CD8-positive, alpha-beta T cell (primary cell): ENCODE measurements at regions of chr7 and their contacts with region 1.

Region 1: DNA sequence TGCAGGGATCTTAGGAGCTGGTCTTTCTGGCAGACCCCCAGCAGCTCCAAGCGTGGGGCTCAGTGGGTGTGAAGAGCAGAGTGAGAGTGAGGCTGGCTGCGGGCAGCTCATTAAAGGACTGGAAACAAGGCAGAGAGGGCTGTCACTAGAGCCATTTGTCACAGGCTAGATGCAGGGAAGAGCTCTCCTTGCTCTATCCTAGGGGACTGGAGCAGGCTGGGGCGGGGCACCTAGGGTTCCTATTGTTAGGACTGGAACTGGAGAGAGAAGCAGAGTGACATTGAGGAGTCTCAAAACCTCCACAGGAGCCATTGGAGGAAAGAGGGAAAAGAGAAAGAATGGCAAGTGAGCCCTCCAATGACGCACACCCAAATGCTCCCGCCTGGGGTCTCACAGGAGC is 772 bp upstream of the DDC start:
- DNase-seq: no peak
- ATAC-seq: no peak
- H3K4me3 ChIP-seq: no peak overlapping the region
- H3K4me3 Mint-ChIP-seq: no peak overlapping the region
- H3K27ac ChIP-seq: no peak overlapping the region
- H3K27ac Mint-ChIP-seq: no peak overlapping the region
- H3K4me1 ChIP-seq: no peaks in the 10 kb centered on the region
- H3K4me1 Mint-ChIP-seq: no peaks in the 10 kb centered on the region
- H3K27me3 ChIP-seq: no peaks in the 10 kb centered on the region
- H3K27me3 Mint-ChIP-seq: no peaks in the 10 kb centered on the region
- CTCF ChIP-seq: no peak

Region 2: GRCh38 chr7:50528266-50529092 is 37.5 kb before region 1 on chr7:
- CTCF ChIA-PET with region 1: no interaction called
- POLR2A ChIA-PET with region 1: no interaction called
- intact Hi-C with region 1: loop called in 1 of 2 experiments (anchors 2 kb)
- DNase-seq: no peak
- ATAC-seq: no peak
- H3K4me3 ChIP-seq: no peak overlapping the region
- H3K4me3 Mint-ChIP-seq: no peak overlapping the region
- H3K27ac ChIP-seq: no peak overlapping the region
- H3K27ac Mint-ChIP-seq: no peak overlapping the region
- H3K4me1 ChIP-seq: no peaks in the 10 kb centered on the region
- H3K4me1 Mint-ChIP-seq: no peaks in the 10 kb centered on the region
- H3K27me3 ChIP-seq: no peaks in the 10 kb centered on the region
- H3K27me3 Mint-ChIP-seq: peaks cover 9% of the 10 kb centered on the region
- CTCF ChIP-seq: no peak

Region 3: DNA sequence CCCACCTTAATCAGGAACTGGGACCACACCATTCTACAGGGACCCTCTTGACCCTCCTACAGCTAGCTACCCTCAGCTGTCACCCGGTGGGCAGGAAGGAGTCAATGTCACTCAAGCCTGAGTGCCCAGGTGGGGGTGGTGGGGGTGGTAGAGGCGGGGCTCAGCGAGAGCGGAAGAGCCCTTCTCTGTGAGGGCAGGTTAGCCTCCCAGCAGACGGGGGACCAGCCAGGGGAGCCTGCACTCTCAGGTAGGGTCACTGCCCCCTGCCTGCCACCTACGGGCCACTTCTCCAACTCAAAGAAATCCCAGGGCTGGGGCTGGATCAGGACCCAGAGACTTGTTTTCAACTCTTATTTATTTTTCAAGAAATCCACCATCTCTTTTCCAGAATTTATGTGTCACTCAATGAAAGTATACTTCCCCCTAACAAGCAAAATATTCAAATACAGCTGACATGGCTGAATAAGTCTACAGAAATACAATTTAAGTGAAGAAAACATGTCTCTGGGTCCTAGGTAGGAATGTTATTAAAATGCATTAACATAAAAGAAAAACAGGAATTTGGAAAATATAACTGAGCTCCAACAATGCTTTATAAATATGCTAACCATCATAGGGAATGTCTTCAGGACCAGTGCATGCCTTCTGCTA is 62.6 kb after region 1 on chr7:
- CTCF ChIA-PET with region 1: no interaction called
- POLR2A ChIA-PET with region 1: no interaction called
- intact Hi-C with region 1: no loop called
- DNase-seq: no peak
- ATAC-seq: no peak
- H3K4me3 ChIP-seq: no peak overlapping the region
- H3K4me3 Mint-ChIP-seq: no peak overlapping the region
- H3K27ac ChIP-seq: no peak overlapping the region
- H3K27ac Mint-ChIP-seq: no peak overlapping the region
- H3K4me1 ChIP-seq: no peaks in the 10 kb centered on the region
- H3K4me1 Mint-ChIP-seq: no peaks in the 10 kb centered on the region
- H3K27me3 ChIP-seq: no peaks in the 10 kb centered on the region
- H3K27me3 Mint-ChIP-seq: peaks cover 8% of the 10 kb centered on the region
- CTCF ChIP-seq: no peak